Breast epithelium (tissue), 4 donors: ENCODE measurements at regions of chr5 and their contacts with region 1.

Region 1: GRCh38 chr5:111887706-111888105 is 130.7 kb upstream of the NREP start:
- DNase-seq: no peak
- H3K4me3 ChIP-seq: no peak overlapping the region
- H3K27ac ChIP-seq: no peak overlapping the region
- H3K4me1 ChIP-seq: no peaks in the 10 kb centered on the region
- H3K27me3 ChIP-seq: no peaks in the 10 kb centered on the region
- CTCF ChIP-seq: no peak
- POLR2A ChIP-seq: no peak

Region 2: DNA sequence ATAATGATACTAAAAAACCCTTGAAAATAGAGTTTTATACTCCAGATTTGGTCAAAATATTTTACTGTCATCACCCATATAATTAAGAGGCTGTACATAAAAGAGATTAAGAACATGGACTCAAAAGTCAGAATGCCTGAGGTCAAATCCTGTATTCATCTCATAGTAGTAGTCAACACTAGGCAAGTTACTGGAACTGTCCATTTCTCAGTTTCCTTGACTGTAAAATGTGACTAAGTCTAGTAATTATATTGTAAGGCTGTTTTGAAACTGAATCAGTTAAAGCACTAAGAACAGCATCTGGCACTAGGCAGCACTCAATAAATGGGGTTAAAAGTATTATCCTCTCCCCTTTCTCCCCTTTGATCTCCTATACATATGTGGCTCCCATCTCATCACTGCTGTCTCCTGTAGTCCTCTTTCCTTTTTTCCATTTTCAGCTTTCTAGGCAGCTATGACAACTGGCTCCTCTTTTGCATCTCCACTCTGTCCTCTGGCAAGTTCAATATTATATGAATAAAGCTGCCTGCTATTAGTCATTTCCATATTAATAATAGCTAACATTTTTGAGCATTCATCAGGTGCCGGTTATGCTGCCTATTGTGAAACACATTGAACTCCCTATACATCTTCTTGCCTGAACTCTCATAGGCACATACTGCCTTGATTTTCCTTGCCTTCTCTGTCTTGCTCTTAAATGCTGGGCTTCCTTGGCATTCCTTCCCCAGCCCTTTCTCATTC is 55.1 kb after region 1 on chr5:
- intact Hi-C with region 1: no loop called
- DNase-seq: no peak
- H3K4me3 ChIP-seq: no peak overlapping the region
- H3K27ac ChIP-seq: no peak overlapping the region
- H3K4me1 ChIP-seq: no peaks in the 10 kb centered on the region
- H3K27me3 ChIP-seq: no peaks in the 10 kb centered on the region
- CTCF ChIP-seq: no peak
- POLR2A ChIP-seq: no peak

Region 3: DNA sequence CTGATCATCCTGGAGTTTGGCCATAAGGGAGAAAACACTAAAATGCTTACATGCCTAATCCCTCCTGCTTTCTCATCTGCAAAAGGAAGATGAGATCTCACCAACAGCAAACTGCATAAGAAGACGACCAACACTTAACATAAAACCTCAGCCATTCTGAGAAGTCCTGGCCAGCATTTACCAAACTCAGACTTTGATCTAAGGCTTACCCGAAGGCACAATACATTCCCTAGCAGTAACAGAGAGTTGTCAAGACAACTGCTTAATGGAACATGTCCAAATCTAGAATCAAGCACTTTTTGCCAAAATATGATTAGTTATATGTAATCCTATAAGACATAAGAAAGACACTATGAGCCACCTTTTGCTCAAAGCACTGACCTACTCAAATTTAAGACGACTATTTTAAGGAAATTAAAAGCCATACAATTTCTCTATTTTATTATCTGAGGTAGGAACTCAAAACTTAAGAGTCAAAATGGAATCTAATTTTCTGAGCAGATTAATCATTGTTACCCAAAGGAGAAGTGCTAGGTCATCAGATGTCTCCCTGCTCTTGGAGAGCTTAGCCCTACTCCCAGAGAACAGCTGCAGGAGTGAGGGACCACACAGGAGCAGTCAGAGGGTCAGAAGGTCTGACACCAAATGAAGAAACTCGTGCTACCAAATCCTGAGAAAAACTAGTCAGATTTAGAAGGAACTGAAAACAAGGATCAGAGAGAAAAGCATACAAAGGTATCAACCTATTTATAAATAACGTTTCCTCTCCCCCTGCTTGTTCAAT is 492.0 kb after region 1 on chr5:
- intact Hi-C with region 1: loop called (anchors 10 kb)
- DNase-seq: no peak
- H3K4me3 ChIP-seq: no peak overlapping the region
- H3K27ac ChIP-seq: no peak overlapping the region
- H3K4me1 ChIP-seq: no peaks in the 10 kb centered on the region
- H3K27me3 ChIP-seq: no peaks in the 10 kb centered on the region
- CTCF ChIP-seq: no peak
- POLR2A ChIP-seq: no peak

Region 4: GRCh38 chr5:113294311-113295110 is 1406.8 kb after region 1 on chr5:
- intact Hi-C with region 1: no loop called
- DNase-seq: peak; percentile 82 to 84
- H3K4me3 ChIP-seq: peak overlapping the region; percentile 64 to 91 (median 86)
- H3K27ac ChIP-seq: peak overlapping the region; percentile 88 to 94
- H3K4me1 ChIP-seq: peaks cover 0 to 5% of the 10 kb centered on the region in 2 donors
- H3K27me3 ChIP-seq: no peaks in the 10 kb centered on the region
- CTCF ChIP-seq: no peak
- POLR2A ChIP-seq: peak; percentile 41